ENCODE measurements at regions of chr3 and their contacts with region 1.

Region 1: GRCh38 chr3:78659386-78659987 is 1108.3 kb downstream of the ROBO1 start:
- DNase-seq: peak in 2 of 10 donors; percentile 31 to 39
- H3K4me3 ChIP-seq: no peak overlapping the region
- H3K27ac ChIP-seq: peak overlapping the region in 2 of 59 donors; percentile 32 to 38
- H3K27me3 ChIP-seq: no peaks in the 10 kb centered on the region
- CTCF ChIP-seq: peak; percentile 67 to 97 (median 81)

Region 2: GRCh38 chr3:78978037-78978436 is 318.6 kb after region 1 on chr3:
- intact Hi-C with region 1: loop called in 1 of 2 experiments (anchors 5 kb)
- DNase-seq: no peak
- H3K4me3 ChIP-seq: no peak overlapping the region
- H3K27ac ChIP-seq: no peak overlapping the region
- H3K27me3 ChIP-seq: no peaks in the 10 kb centered on the region
- CTCF ChIP-seq: peak in 51 of 56 donors; percentile 14 to 71 (median 48)

Region 3: DNA sequence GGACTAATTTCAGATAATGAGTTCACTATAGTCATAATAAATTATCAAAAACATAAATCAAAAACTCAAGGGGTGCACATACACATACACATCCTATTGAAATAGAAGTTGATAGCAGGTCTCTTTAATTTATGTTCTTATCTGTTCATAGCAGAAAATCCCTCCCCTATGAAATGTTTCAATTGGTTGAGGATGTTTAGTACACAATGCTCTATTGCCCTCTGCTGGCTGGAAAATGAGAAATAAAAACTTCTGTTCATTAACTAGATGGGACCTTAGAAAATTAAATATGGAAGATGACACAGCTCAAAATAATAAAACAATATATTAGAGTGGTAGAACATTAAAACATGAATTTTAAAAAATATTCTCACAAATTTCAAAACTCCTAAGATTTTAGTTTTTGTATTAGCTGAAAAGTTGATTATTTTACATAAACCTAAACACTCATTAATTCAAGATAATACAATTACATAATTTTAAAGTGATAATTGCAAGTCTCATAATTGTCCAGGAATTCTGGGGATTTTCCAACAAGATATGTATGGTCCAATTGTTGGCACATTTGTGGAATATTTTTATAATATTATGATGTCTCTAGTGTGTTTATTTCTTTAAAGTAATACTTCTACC is 373.3 kb after region 1 on chr3:
- intact Hi-C with region 1: loop called (anchors 2 to 5 kb)
- DNase-seq: peak in 1 of 10 donors; percentile 17
- H3K4me3 ChIP-seq: no peak overlapping the region
- H3K27ac ChIP-seq: no peak overlapping the region
- H3K27me3 ChIP-seq: peaks cover 0 to 5% (median 0%) of the 10 kb centered on the region in 45 donors
- CTCF ChIP-seq: peak; percentile 54 to 91 (median 77)

Region 4: DNA sequence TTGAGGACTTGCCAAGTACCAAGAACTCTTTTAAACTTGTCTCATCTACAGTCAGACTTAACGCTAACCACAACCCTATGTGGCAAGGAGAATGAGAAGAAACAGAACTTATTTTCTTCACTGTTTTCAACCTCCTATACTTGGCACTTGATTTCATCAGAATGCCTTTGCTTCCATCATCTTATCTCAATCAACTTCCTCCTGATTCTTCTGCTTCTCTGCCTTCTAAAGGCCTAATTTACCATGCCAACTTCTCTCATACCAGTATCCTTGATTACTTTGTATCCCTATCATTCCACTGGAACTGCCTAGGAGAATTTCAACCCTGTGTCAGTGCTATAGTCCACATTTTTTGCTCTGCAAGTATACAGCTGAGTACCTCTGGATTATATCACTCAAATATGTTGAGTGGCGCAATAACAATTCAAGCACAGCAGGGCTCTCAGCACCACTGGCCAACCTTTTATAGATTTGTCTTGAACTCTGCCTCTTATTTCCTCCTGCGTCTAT is 694.7 kb after region 1 on chr3:
- intact Hi-C with region 1: loop called in 1 of 2 experiments (anchors 10 kb)
- DNase-seq: no peak
- H3K4me3 ChIP-seq: no peak overlapping the region
- H3K27ac ChIP-seq: no peak overlapping the region
- H3K27me3 ChIP-seq: no peaks in the 10 kb centered on the region
- CTCF ChIP-seq: no peak